Activated naive CD4-positive, alpha-beta T cell treated with anti-CD3 and anti-CD28 coated beads for 36 hours (primary cell): ENCODE measurements at regions of chr12 and their contacts with region 1.

Region 1: DNA sequence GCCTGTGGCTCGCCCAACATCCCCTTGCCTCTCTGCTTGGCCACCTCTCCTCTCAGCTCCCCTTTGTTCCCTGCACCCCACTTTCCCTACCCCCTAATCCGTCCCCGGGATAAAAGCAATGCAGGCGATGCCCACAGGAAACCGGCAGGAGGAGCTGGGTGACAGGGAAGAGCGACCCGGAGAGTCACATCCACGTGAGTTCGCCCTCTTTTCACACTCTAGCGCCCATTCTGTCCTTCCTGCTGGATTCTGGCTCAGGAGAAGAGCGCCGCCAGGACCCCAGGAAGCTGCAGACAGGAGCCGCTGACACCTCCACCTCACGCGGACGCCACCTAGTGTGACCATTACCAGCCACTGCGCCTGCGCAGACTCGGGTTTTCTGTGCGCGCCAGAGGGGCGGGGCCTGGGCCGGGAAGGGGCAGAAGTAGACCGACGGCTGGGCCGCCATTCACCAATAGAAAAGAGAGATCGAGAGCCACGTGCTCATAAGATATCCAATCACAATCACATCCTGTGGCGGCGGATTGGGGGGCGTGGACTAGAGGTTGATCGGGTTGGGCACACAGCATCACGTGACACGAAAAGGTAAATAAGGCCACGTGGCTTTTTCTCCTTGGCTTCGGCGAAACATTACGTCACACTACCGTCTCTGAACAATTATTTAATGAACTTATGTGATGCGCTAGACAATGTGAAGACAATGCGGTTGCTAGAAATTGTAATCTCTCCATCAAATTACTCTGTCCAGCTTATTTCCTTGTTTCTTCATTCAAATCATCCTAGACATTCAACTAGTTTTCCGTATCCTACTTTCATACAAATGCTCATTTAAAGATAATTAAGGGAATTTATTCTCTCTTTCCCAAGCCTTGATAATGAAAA is 10.1 kb downstream of the PLA2G1B start:
- DNase-seq: peak; percentile 100
- H3K4me3 Mint-ChIP-seq: peak overlapping the region; percentile 87
- H3K27ac Mint-ChIP-seq: peak overlapping the region; percentile 88
- H3K4me1 Mint-ChIP-seq: peaks cover 11% of the 10 kb centered on the region
- H3K27me3 Mint-ChIP-seq: no peaks in the 10 kb centered on the region

Region 2: GRCh38 chr12:120292661-120293531 is 24.6 kb before region 1 on chr12 and contains the start of gene RNU4-1:
- CTCF ChIA-PET with region 1: interaction called, 5 read pairs
- intact Hi-C with region 1: loop called (anchors 1 kb)
- DNase-seq: peak; percentile 88
- H3K4me3 Mint-ChIP-seq: no peak within 1 kb of the TSS
- H3K27ac Mint-ChIP-seq: no peak within 1 kb of the TSS
- H3K4me1 Mint-ChIP-seq: peaks cover 6% of the 10 kb centered on the region
- H3K27me3 Mint-ChIP-seq: no peaks in the 10 kb centered on the region
- total RNA-seq, gene RNU4-1: 685 to 1,294 TPM

Region 3: GRCh38 chr12:120301962-120302815 is 15.3 kb before region 1 on chr12 and contains the start of gene SIRT4:
- CTCF ChIA-PET with region 1: interaction called, 19 read pairs
- intact Hi-C with region 1: loop called (anchors 1 kb)
- DNase-seq: peak; percentile 96
- H3K4me3 Mint-ChIP-seq: peak within 1 kb of the TSS; percentile 100
- H3K27ac Mint-ChIP-seq: peak within 1 kb of the TSS; percentile 83
- H3K4me1 Mint-ChIP-seq: peaks cover 7% of the 10 kb centered on the region
- H3K27me3 Mint-ChIP-seq: no peaks in the 10 kb centered on the region
- total RNA-seq, gene SIRT4: 2.0 to 3.7 TPM

Region 4: DNA sequence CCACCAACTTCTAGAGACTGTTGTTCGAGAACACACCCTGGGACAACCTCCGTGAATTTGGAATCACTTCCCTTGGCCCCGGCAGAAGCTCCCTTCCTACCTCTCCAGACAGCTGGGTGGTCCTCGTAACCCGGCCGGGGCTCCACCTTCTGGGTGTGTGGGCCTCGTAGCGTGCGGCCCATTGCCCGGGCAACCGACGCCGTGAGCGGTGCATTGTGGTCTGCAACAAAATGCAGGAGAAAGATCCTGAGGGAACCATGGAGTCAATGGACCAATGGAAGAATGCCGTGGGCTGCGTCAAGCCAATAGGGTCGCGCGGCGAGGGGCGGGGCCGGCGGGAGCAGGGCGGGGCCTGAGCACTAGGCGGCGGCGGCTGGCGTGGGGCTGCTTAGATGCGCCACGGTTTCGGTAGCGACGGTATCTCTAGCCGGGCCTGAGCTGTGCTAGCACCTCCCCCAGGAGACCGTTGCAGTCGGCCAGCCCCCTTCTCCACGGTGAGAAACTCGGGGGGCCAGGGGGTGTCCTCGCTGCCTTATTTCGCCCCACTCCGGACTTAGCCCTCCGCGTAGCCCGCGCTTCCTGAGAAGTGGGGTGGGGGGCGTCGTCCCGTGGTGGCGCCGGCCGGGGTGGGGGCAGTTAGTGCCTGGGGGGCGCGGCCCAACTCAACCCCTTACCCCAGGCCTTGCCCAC is 178.4 kb after region 1 on chr12 and contains the start of gene DYNLL1:
- CTCF ChIA-PET with region 1: no interaction called
- intact Hi-C with region 1: loop called (anchors 1 kb)
- DNase-seq: peak; percentile 97
- H3K4me3 Mint-ChIP-seq: peak within 1 kb of the TSS; percentile 84
- H3K27ac Mint-ChIP-seq: peak within 1 kb of the TSS; percentile 77
- H3K4me1 Mint-ChIP-seq: peaks cover 21% of the 10 kb centered on the region
- H3K27me3 Mint-ChIP-seq: no peaks in the 10 kb centered on the region
- total RNA-seq, gene DYNLL1: 93.4 to 93.5 TPM

Region 5: DNA sequence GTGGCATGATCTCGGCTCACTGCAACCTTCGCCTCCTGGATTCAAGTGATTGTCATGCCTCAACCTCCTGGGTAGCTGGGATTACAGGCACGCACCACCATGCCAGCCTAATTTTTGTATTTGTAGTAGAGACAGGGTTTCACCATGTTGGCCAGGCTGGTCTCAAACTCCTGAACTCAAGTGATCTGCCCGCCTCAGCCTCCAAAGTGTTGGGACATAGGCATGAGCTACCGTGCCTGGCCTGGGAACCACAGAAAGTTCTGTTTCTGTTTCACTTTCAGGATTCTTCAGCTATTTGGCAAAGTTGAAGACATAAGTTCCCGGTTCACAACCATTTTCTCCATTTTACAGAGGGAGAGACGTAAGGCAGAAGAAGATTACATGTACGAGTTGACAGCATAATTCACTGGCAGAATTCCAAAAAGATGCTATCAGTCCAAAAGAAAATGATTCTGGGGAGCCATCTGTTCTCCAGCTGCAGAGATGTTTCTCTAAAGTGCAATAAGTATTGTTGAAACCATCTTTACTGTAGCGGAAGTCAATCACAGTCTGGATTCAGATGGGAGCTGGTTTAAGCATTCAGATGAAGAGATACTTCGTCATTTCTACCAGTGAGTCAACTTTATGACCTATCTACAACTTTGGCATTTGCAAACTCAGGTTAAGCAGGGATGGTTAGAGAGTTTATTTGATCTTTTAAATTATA is 1074.3 kb after region 1 on chr12:
- CTCF ChIA-PET with region 1: no interaction called
- intact Hi-C with region 1: no loop called
- DNase-seq: peak; percentile 57
- H3K4me3 Mint-ChIP-seq: no peak overlapping the region
- H3K27ac Mint-ChIP-seq: no peak overlapping the region
- H3K4me1 Mint-ChIP-seq: peaks cover 9% of the 10 kb centered on the region
- H3K27me3 Mint-ChIP-seq: peaks cover 3% of the 10 kb centered on the region